Transverse colon (tissue), 4 donors: ENCODE measurements at regions of chr9 and their contacts with region 1.

Region 1: GRCh38 chr9:128913995-128914772 is 6.6 kb upstream of the PHYHD1 start:
- DNase-seq: no peak
- H3K4me3 ChIP-seq: no peak overlapping the region
- H3K27ac ChIP-seq: peak overlapping the region; percentile 22 to 66 (median 58)
- H3K4me1 ChIP-seq: peaks cover 42 to 52% (median 46%) of the 10 kb centered on the region in 4 donors
- H3K27me3 ChIP-seq: no peaks in the 10 kb centered on the region
- CTCF ChIP-seq: no peak
- EP300 ChIP-seq: no peak
- POLR2A ChIP-seq: no peak

Region 2: GRCh38 chr9:128881901-128882681 is 32.1 kb before region 1 on chr9 and contains the starts of genes KYAT1 and LRRC8A:
- in situ Hi-C with region 1: no loop called
- intact Hi-C with region 1: loop called (anchors 2 kb)
- DNase-seq: peak; percentile 98
- H3K4me3 ChIP-seq: peak within 1 kb of the TSS; percentile 95 to 100 (median 98)
- H3K27ac ChIP-seq: peak within 1 kb of the TSS; percentile 98 to 100 (median 98)
- H3K4me1 ChIP-seq: peaks cover 6 to 48% (median 28%) of the 10 kb centered on the region in 4 donors
- H3K27me3 ChIP-seq: no peaks in the 10 kb centered on the region
- CTCF ChIP-seq: peak in 1 of 5 experiments; percentile 21
- EP300 ChIP-seq: no peak
- POLR2A ChIP-seq: no peak
- total RNA-seq, gene KYAT1: 1.6 to 3.5 TPM in 2 of 4 donors, not detected in the others
- total RNA-seq, gene LRRC8A: 29.4 to 116 (median 35.5) TPM

Region 3: DNA sequence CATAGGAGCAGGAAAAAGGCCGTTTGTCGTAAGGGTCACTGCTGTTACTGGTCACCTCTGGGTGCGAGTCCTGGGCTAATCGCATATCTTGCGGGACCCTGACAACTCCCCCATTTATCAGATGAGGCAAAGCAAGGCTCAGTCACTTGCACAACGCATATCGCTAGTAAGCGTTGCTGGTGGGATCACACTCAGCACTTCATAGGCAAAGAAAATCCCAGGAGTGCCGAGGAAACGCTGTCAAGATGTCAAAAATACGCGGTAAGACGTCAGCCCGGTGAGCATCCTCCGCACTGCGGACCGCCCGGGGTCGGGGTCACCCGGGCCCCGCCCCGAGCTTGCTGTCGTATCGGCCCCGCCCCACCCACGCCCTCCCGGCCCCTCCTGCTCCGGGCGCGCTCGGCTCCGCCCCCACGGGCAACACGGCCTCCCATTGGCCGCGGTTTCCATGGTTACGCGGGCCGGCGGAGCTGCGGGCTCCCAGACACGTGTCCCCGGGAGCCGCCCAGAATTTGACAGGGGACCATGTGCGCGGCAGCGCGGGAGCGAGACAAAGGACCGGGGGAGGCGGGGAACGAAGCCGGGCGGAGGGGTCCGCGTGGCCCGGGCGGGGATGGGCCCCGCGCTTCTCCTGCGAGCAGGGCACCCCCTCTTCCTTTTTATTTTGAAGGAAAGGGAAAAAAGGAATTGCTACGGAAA is 344.1 kb after region 1 on chr9:
- in situ Hi-C with region 1: no loop called
- intact Hi-C with region 1: no loop called
- DNase-seq: peak; percentile 81
- H3K4me3 ChIP-seq: peak overlapping the region in 2 of 4 donors; percentile 3 to 33
- H3K27ac ChIP-seq: peak overlapping the region in 1 of 4 donors; percentile 6
- H3K4me1 ChIP-seq: peaks cover 0 to 17% (median 12%) of the 10 kb centered on the region in 4 donors
- H3K27me3 ChIP-seq: peaks cover 44% of the 10 kb centered on the region
- CTCF ChIP-seq: no peak
- EP300 ChIP-seq: no peak
- POLR2A ChIP-seq: no peak

Region 4: GRCh38 chr9:129305251-129305650 is 391.1 kb after region 1 on chr9:
- in situ Hi-C with region 1: no loop called
- intact Hi-C with region 1: no loop called
- DNase-seq: no peak
- H3K4me3 ChIP-seq: no peak overlapping the region
- H3K27ac ChIP-seq: no peak overlapping the region
- H3K4me1 ChIP-seq: no peaks in the 10 kb centered on the region
- H3K27me3 ChIP-seq: no peaks in the 10 kb centered on the region
- CTCF ChIP-seq: no peak
- EP300 ChIP-seq: no peak
- POLR2A ChIP-seq: no peak